ENCODE measurements at regions of chr10 and their contacts with region 1.

Region 1: GRCh38 chr10:24920907-24921881 is 31.2 kb downstream of the PRTFDC1 start:
- DNase-seq: peak; percentile 77
- H3K4me3 Mint-ChIP-seq: peak overlapping the region; percentile 55
- H3K27ac Mint-ChIP-seq: peak overlapping the region; percentile 93
- H3K4me1 Mint-ChIP-seq: peaks cover 23% of the 10 kb centered on the region
- H3K27me3 Mint-ChIP-seq: no peaks in the 10 kb centered on the region

Region 2: GRCh38 chr10:24603333-24603732 is 317.9 kb before region 1 on chr10:
- intact Hi-C with region 1: loop called (anchors 5 kb)
- DNase-seq: no peak
- H3K4me3 Mint-ChIP-seq: peak overlapping the region; percentile 32
- H3K27ac Mint-ChIP-seq: peak overlapping the region; percentile 85
- H3K4me1 Mint-ChIP-seq: peaks cover 27% of the 10 kb centered on the region
- H3K27me3 Mint-ChIP-seq: no peaks in the 10 kb centered on the region

Region 3: DNA sequence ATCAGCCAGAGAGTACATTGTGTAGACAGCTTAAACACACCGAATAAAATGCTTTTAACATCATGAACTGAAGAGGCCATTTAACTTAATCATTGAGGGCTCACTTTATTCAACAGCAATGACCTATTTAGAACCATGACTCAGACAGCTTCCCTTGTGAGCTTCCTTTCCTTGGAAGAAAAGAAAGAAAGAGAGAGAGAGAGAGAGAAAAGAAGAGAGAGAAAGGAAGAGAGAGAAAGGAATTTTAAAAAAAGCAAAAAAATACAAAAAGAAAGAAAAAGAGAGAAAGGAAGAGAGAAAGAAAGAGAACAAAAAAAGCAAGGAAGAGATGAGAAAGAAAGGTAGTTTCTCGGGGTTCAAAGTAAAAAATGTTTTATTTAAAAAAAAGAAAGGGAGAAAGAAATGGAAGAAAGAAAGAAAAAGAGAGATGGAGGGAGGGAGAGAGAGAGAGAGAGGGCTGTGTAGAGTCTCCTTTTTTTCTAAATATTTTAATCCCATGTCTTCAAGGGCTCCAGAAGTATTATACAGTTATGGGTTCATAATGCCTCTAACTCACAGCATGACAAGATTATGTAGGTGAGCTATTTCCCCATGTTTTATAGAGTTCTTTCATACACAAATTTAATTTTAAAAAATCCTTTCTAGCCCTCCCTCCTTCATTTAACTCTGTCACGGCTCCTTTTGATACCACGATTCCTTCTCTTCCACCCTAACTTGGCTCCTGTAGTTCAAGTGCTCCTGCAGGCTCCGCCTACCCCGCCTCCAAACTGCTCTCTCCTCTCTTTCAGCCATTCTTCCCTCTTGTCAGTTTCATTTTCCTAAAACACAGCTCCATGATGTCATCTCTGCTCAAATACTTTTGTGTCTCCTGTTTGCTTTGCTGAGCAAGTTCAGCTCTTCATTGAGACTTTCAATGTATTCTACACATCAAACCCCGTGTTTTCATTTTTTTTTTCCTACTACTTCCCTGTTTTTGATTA is 54.3 kb before region 1 on chr10:
- intact Hi-C with region 1: loop called (anchors 5 kb)
- DNase-seq: peak; percentile 67
- H3K4me3 Mint-ChIP-seq: peak overlapping the region; percentile 60
- H3K27ac Mint-ChIP-seq: no peak overlapping the region
- H3K4me1 Mint-ChIP-seq: peaks cover 35% of the 10 kb centered on the region
- H3K27me3 Mint-ChIP-seq: no peaks in the 10 kb centered on the region

Region 4: DNA sequence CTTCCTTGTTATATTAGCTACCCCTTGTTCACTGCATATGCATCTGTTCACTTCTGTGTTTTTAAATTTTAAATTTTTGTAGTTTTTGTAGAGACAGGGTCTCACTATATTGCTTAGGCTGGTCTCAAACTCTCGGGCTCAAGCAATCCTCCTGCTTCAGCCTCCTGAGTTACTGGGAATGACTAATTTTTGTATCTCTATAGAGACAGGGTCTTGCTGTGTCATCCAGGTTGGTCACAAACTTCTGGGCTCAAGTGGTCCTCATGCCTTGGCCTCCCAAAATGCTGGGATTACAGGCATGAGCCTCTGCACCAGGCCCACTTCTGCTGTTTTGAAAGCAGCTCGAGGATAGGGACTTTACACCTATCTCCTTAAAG is 33.4 kb before region 1 on chr10:
- intact Hi-C with region 1: loop called (anchors 1 kb)
- DNase-seq: no peak
- H3K4me3 Mint-ChIP-seq: peak overlapping the region; percentile 60
- H3K27ac Mint-ChIP-seq: no peak overlapping the region
- H3K4me1 Mint-ChIP-seq: peaks cover 26% of the 10 kb centered on the region
- H3K27me3 Mint-ChIP-seq: no peaks in the 10 kb centered on the region

Region 5: GRCh38 chr10:24901686-24902399 is 19.4 kb before region 1 on chr10:
- intact Hi-C with region 1: loop called (anchors 1 kb)
- DNase-seq: no peak
- H3K4me3 Mint-ChIP-seq: peak overlapping the region; percentile 62
- H3K27ac Mint-ChIP-seq: peak overlapping the region; percentile 85
- H3K4me1 Mint-ChIP-seq: peaks cover 30% of the 10 kb centered on the region
- H3K27me3 Mint-ChIP-seq: no peaks in the 10 kb centered on the region

Region 6: DNA sequence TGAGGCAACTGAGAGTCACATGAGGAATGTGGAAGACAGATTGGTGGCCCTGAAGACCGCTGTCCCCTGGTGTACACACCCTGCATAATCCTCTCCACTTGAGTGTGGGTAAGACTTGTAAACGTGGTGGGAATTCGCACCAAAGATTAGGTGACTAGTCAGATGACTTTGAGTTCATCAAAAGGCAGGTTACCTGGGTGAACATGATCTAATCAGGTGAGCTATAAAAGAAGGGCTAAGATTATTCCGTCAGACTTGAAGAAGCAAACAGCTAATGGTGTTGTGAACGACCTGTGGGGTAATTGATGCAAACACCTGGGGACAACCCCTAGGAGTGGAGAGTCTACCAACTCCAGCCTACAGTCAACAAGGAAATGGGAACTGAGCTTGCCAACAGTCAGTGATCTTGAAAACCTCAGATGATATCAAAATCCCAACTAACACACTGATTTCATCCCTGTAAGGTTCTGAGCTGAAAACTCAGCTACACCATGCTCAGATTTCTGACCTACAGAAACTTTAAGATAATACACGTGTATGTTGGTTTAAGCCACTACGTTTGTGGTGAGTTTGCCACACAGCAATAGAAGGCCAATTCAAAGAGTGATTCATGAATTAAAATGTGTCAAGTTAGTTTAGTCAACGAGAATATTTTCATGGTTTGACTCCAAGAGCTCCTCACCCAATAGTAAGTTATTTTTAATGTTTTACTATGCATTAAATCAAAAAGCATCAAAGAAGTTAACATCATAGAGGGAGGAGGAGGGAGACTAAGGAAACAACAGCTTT is 14.5 kb after region 1 on chr10:
- intact Hi-C with region 1: no loop called
- DNase-seq: peak; percentile 49
- H3K4me3 Mint-ChIP-seq: no peak overlapping the region
- H3K27ac Mint-ChIP-seq: no peak overlapping the region
- H3K4me1 Mint-ChIP-seq: no peaks in the 10 kb centered on the region
- H3K27me3 Mint-ChIP-seq: peaks cover 3% of the 10 kb centered on the region

Region 7: DNA sequence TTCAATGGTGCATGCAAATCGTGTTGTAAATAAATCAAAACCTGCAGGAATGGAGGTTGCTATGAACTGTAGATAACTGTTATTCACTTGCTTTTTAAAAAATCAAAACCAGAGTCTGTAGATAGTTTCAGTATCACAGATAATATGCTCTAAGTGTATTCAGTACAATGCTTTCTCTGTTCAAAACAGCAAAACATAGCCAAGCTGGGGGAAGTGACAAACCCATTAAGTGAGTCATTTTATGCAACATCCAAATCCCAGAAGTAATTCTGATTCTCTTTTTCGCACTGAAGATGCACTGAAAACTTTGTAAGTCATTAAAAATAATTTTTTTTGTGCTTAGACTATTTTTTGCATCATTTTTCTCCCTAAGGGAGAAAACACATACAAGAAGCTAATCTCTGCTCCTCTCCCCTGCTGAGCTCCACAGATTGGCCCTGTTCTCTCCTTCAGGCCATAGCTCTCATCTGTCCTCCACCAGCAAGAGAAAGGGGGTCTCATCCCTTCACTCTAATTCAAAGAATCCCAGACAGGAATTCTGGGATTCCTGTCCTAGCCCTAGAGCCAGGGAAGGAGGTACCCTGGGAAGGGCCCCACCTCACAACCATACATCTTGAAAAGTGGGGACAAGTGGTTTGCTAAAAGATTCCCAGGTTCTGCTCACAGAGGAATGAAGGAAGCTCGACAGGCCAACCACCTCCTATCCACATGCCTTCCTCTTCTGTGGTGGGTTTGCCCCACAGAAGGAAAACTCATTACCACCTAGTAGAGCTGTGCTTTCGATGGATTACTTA is 26.3 kb after region 1 on chr10:
- intact Hi-C with region 1: loop called (anchors 2 kb)
- DNase-seq: no peak
- H3K4me3 Mint-ChIP-seq: no peak overlapping the region
- H3K27ac Mint-ChIP-seq: no peak overlapping the region
- H3K4me1 Mint-ChIP-seq: peaks cover 14% of the 10 kb centered on the region
- H3K27me3 Mint-ChIP-seq: no peaks in the 10 kb centered on the region

Measured in activated CD4-positive, alpha-beta T cell treated with anti-CD3 and anti-CD28 coated beads, Interleukin-2, amount 10 ng/mL, durations not matched to agents 24 days and 14 days (primary cell).